ENCODE measurements at regions of chr1 and their contacts with region 1.

Region 1: GRCh38 chr1:239558991-239559390 is 172.6 kb downstream of the CHRM3 start:
- DNase-seq: no peak
- H3K4me3 Mint-ChIP-seq: no peak overlapping the region
- H3K27ac Mint-ChIP-seq: no peak overlapping the region
- H3K4me1 Mint-ChIP-seq: peaks cover 12% of the 10 kb centered on the region
- H3K27me3 Mint-ChIP-seq: no peaks in the 10 kb centered on the region

Region 2: DNA sequence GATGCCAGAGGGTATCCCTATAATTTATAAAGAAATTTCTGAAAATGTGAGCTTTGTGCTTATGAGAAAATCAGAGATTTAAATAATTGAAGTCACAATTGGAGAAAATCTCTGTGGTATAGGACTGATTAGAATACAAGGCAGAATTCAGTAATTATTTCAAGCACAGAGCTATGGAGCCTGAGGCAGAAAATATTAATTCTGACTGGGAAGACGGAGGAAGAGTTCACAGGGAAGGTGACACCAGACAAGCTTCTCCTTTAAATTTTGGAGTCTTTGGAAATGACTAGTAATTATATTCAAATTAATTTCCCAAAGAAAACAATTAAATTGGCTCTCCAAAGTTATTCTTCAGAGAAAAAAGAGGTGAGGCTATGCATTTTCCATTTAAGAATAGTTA is 51.2 kb before region 1 on chr1:
- CTCF ChIA-PET with region 1: no interaction called
- intact Hi-C with region 1: loop called (anchors 5 kb)
- DNase-seq: no peak
- H3K4me3 Mint-ChIP-seq: no peak overlapping the region
- H3K27ac Mint-ChIP-seq: no peak overlapping the region
- H3K4me1 Mint-ChIP-seq: peaks cover under 1% of the 10 kb centered on the region
- H3K27me3 Mint-ChIP-seq: no peaks in the 10 kb centered on the region